Caco-2 (cell line): ENCODE measurements at regions of chr19 and their contacts with region 1.

Region 1: GRCh38 chr19:1304197-1304924 is 18.7 kb downstream of the EFNA2 start:
- DNase-seq: peak; percentile 64 to 72
- H3K4me3 ChIP-seq: no peak overlapping the region
- H3K4me3 Mint-ChIP-seq: no peak overlapping the region
- H3K27ac Mint-ChIP-seq: no peak overlapping the region
- H3K4me1 ChIP-seq: peaks cover 11% of the 10 kb centered on the region
- H3K4me1 Mint-ChIP-seq: peaks cover 5% of the 10 kb centered on the region
- H3K27me3 ChIP-seq: no peaks in the 10 kb centered on the region
- H3K27me3 Mint-ChIP-seq: no peaks in the 10 kb centered on the region
- CTCF ChIP-seq: no peak

Region 2: DNA sequence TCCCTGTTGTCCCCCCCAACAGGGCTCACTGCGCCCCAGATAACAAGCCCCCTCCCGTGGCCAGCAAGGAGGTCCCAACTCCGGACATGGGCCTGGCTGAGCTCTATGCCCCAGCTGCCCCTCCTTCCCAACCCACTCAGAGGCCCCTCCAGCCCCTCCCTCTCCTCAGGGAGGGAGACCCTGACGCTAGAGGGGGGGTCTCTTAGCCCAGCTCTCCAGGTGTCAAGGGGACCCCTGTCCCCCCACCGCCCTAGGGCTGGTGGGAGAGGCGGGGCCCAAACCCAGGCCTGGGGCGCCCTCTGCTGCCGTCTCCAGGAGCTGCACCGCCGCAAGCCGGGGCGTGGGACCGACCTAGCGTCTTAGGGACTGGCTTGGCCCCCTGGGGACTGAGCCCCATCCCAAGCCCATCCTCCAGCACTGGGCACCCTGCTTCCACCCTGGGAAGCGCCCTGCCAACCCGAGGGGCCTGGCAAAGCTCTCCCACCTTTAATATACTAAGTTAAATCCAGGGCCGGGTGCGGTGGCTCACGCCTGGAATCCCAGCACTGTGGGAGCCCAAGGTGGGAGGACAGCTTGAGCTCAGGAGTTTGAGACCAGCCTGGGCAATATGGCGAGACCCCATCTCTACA is 302.7 kb before region 1 on chr19:
- CTCF ChIA-PET with region 1: no interaction called
- POLR2A ChIA-PET with region 1: no interaction called
- intact Hi-C with region 1: no loop called
- DNase-seq: peak in 1 of 2 experiments; percentile 79
- H3K4me3 ChIP-seq: no peak overlapping the region
- H3K4me3 Mint-ChIP-seq: peak overlapping the region; percentile 69
- H3K27ac Mint-ChIP-seq: no peak overlapping the region
- H3K4me1 ChIP-seq: peaks cover 10% of the 10 kb centered on the region
- H3K4me1 Mint-ChIP-seq: no peaks in the 10 kb centered on the region
- H3K27me3 ChIP-seq: peaks cover 2% of the 10 kb centered on the region; the same call in 1 of the 2 replicates
- H3K27me3 Mint-ChIP-seq: peaks cover 15% of the 10 kb centered on the region
- CTCF ChIP-seq: peak; percentile 85 to 93

Region 3: GRCh38 chr19:1260636-1261537 is 43.5 kb before region 1 on chr19:
- CTCF ChIA-PET with region 1: no interaction called
- POLR2A ChIA-PET with region 1: no interaction called
- intact Hi-C with region 1: no loop called
- DNase-seq: peak; percentile 96 to 97
- H3K4me3 ChIP-seq: peak overlapping the region; percentile 65
- H3K4me3 Mint-ChIP-seq: peak overlapping the region; percentile 78
- H3K27ac Mint-ChIP-seq: peak overlapping the region; percentile 98
- H3K4me1 ChIP-seq: peaks cover 66% of the 10 kb centered on the region
- H3K4me1 Mint-ChIP-seq: peaks cover 24% of the 10 kb centered on the region
- H3K27me3 ChIP-seq: no peaks in the 10 kb centered on the region
- H3K27me3 Mint-ChIP-seq: no peaks in the 10 kb centered on the region
- CTCF ChIP-seq: no peak

Region 4: GRCh38 chr19:1285737-1286360 is 18.5 kb before region 1 on chr19 and contains the start of gene EFNA2:
- CTCF ChIA-PET with region 1: no interaction called
- POLR2A ChIA-PET with region 1: no interaction called
- intact Hi-C with region 1: loop called (anchors 1 kb)
- DNase-seq: no peak
- H3K4me3 ChIP-seq: peak within 1 kb of the TSS; percentile 72
- H3K4me3 Mint-ChIP-seq: peak within 1 kb of the TSS; percentile 80
- H3K27ac Mint-ChIP-seq: peak within 1 kb of the TSS; percentile 84
- H3K4me1 ChIP-seq: peaks cover 43% of the 10 kb centered on the region
- H3K4me1 Mint-ChIP-seq: peaks cover 8% of the 10 kb centered on the region
- H3K27me3 ChIP-seq: no peaks in the 10 kb centered on the region
- H3K27me3 Mint-ChIP-seq: no peaks in the 10 kb centered on the region
- CTCF ChIP-seq: no peak
- total RNA-seq, gene EFNA2: 18.6 and 20.6 TPM in 2 replicates

Region 5: GRCh38 chr19:1315470-1316231 is 11.3 kb after region 1 on chr19:
- CTCF ChIA-PET with region 1: interaction called, 10 read pairs
- POLR2A ChIA-PET with region 1: interaction called, 4 read pairs
- intact Hi-C with region 1: no loop called
- DNase-seq: peak; percentile 50 to 76
- H3K4me3 ChIP-seq: peak overlapping the region; percentile 26
- H3K4me3 Mint-ChIP-seq: peak overlapping the region; percentile 33
- H3K27ac Mint-ChIP-seq: peak overlapping the region; percentile 39
- H3K4me1 ChIP-seq: peaks cover 14% of the 10 kb centered on the region
- H3K4me1 Mint-ChIP-seq: no peaks in the 10 kb centered on the region
- H3K27me3 ChIP-seq: no peaks in the 10 kb centered on the region
- H3K27me3 Mint-ChIP-seq: no peaks in the 10 kb centered on the region
- CTCF ChIP-seq: peak; percentile 56 to 66